MCF 10A (cell line): ENCODE measurements at regions of chr11 and their contacts with region 1.

Region 1: DNA sequence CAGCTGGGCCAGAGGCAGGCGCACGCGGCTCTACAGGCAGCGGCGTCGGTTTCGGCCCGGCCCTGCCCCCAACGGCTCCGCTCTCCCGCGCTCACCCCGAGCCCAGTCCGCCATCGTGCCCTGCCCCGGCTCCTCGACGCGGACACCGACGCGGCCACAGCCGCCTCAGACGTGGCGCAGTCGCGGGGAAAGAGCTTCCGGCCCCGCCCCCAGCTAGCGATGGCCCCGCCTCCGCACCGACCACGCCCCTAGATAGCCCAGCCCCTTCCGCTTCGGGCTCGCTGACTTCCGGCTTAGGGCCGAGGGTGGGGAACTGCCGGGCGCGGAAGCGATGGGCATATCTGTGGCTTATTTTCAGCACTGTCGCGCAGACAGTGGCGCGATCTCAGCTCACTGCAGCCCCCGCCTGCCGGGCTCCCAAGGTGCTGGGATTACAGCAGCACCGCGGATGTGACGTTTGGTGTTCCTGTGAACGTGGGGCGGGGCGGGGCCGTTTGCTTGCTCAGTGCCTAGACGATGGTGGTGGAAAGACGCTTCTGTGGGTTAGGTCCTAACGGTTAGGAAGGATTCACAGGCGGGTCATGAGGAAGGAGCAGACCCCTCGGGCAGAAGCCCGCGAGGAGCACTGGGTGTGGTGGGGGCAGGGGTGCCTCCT is at the starts of genes BET1L and RIC8A:
- DNase-seq: peak; percentile 97
- H3K4me3 Mint-ChIP-seq: peak within 1 kb of the TSS; percentile 99
- H3K27ac Mint-ChIP-seq: peak within 1 kb of the TSS; percentile 99
- H3K4me1 Mint-ChIP-seq: peaks cover 15% of the 10 kb centered on the region
- H3K27me3 Mint-ChIP-seq: no peaks in the 10 kb centered on the region
- CTCF ChIP-seq: no peak
- total RNA-seq, gene BET1L: 65.3 and 66.1 TPM in 2 replicates
- total RNA-seq, gene RIC8A: 93.3 and 109 TPM in 2 replicates

Region 2: DNA sequence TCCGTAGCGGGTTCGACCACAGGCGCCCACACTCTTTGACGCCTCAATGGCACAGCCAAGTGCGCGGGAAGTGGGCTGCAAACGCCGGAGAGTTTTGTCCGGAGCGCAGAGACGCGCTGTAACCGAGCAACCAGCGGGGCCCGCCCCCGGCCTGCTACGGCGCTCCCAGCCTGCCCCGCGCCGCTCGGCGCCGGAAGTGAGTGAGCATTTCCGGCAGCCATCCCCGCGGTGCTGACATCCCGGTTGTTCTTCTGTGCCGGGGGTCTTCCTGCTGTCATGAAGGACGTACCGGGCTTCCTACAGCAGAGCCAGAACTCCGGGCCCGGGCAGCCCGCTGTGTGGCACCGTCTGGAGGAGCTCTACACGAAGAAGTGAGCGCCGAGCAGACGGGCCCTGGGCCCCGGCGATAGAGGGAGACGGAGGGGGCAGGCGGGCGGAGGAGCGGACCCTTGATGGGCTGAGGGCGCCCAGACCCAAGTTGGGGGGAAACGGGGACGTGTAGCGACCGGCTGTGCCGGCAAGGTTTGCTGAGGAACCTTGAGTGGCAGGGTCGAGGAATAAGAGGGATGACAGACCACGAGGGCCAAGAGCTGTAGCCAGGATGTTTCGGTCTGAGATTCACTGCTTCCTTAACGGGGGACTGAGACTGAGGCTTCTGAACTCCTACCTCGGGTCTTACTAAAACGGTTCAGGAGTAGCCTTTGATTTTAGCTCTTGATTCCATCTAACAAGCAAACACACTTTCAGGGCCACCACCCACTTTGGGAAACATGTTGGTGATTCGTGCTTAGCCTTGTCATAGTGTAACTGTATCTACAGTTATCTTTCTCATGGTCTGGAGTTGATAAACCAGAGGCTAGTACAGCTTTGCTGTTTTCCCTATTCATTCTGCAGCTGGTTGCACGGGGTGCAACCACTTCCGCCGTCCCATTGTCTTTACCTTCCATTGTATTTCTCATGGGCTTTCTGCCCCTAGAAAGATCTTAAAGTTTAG is 29.7 kb after region 1 on chr11 and contains the start of gene PSMD13:
- CTCF ChIA-PET with region 1: interaction called, 3 read pairs
- POLR2A ChIA-PET with region 1: interaction called, 136 read pairs
- intact Hi-C with region 1: loop called (anchors 2 kb)
- DNase-seq: peak; percentile 76
- H3K4me3 Mint-ChIP-seq: peak within 1 kb of the TSS; percentile 79
- H3K27ac Mint-ChIP-seq: peak within 1 kb of the TSS; percentile 96
- H3K4me1 Mint-ChIP-seq: peaks cover 24% of the 10 kb centered on the region
- H3K27me3 Mint-ChIP-seq: no peaks in the 10 kb centered on the region
- CTCF ChIP-seq: no peak
- total RNA-seq, gene PSMD13: 86.8 and 103 TPM in 2 replicates

Region 3: DNA sequence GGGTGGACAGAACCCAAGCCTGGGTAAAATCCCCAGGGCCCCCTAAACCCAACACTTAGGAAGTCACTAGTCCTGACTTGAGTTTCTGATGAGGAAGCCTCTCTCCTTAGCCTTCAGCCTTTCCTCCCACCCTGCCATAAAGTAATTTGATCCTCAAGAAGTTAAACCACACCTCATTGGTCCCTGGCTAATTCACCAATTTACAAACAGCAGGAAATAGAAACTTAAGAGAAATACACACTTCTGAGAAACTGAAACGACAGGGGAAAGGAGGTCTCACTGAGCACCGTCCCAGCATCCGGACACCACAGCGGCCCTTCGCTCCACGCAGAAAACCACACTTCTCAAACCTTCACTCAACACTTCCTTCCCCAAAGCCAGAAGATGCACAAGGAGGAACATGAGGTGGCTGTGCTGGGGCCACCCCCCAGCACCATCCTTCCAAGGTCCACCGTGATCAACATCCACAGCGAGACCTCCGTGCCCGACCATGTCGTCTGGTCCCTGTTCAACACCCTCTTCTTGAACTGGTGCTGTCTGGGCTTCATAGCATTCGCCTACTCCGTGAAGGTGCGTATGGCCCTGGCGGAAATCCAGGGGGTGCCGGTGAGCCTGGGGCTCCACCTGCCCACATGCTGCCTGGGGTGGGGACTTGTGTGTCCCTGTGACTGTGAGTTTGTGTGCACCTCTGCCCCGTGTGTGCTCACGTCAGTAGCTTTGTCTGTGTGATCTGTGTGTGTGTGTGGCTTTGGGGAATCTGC is 106.6 kb after region 1 on chr11 and contains the start of gene IFITM1:
- CTCF ChIA-PET with region 1: no interaction called
- POLR2A ChIA-PET with region 1: interaction called, 14 read pairs
- intact Hi-C with region 1: no loop called
- DNase-seq: peak; percentile 74
- H3K4me3 Mint-ChIP-seq: peak within 1 kb of the TSS; percentile 46
- H3K27ac Mint-ChIP-seq: no peak within 1 kb of the TSS
- H3K4me1 Mint-ChIP-seq: peaks cover 19% of the 10 kb centered on the region
- H3K27me3 Mint-ChIP-seq: no peaks in the 10 kb centered on the region
- CTCF ChIP-seq: no peak
- total RNA-seq, gene IFITM1: 1.8 and 4.8 TPM in 2 replicates

Region 4: GRCh38 chr11:363948-364761 is 156.8 kb after region 1 on chr11:
- CTCF ChIA-PET with region 1: interaction called, 8 read pairs
- POLR2A ChIA-PET with region 1: interaction called, 14 read pairs
- intact Hi-C with region 1: no loop called
- DNase-seq: peak; percentile 88
- H3K4me3 Mint-ChIP-seq: peak overlapping the region; percentile 35
- H3K27ac Mint-ChIP-seq: peak overlapping the region; percentile 13
- H3K4me1 Mint-ChIP-seq: peaks cover 17% of the 10 kb centered on the region
- H3K27me3 Mint-ChIP-seq: peaks cover 24% of the 10 kb centered on the region
- CTCF ChIP-seq: peak; percentile 81

Region 5: GRCh38 chr11:506238-506994 is 299.1 kb after region 1 on chr11:
- CTCF ChIA-PET with region 1: interaction called, 3 read pairs
- POLR2A ChIA-PET with region 1: interaction called, 29 read pairs
- intact Hi-C with region 1: no loop called
- DNase-seq: peak; percentile 95
- H3K4me3 Mint-ChIP-seq: peak overlapping the region; percentile 95
- H3K27ac Mint-ChIP-seq: peak overlapping the region; percentile 99
- H3K4me1 Mint-ChIP-seq: peaks cover 6% of the 10 kb centered on the region
- H3K27me3 Mint-ChIP-seq: no peaks in the 10 kb centered on the region
- CTCF ChIP-seq: no peak

Region 6: DNA sequence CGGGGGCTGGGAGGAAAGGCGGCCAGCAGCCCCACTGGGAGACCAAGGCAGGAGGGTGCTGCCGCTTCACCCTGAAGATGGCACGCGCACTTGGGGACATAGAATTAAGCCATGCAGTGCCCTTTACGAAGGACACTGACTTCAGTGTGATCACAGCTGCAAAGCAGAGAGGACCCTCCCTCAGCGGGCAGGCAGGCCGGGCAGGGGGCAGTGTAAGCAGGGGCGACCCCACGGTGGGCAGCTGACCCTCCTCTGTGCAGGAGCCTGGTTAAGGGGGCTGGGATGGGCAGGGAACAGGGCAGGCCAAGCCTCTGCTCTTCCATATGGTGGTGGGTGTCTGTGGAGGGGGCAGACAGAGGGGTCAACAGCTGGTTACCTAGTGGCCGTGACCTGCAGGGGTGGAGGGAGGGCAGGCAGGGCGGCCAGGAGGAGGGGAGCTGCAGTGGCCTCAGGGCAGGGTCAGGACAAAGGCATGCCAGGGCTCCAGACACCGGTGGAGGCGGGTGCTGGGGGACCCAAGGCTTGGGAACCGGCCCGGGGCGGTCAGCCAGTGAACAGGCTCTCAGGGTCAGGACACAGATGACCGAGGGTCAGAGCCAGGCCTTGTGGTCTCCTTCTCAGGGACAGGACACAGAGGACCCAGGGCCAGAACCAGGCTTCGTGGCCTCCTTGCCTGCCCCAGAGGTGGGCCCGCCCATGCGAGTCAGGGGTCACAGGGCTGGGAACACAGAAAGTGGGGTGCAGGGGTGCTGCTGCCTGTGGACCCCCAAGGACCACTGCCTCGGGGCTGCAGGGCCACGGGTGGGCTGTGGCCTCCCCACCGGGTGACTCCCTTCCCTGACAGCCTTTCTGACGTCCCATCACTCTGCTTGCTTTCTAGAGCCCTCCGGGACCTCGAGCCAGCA is 346.0 kb after region 1 on chr11:
- CTCF ChIA-PET with region 1: no interaction called
- POLR2A ChIA-PET with region 1: no interaction called
- intact Hi-C with region 1: no loop called
- DNase-seq: no peak
- H3K4me3 Mint-ChIP-seq: no peak overlapping the region
- H3K27ac Mint-ChIP-seq: no peak overlapping the region
- H3K4me1 Mint-ChIP-seq: no peaks in the 10 kb centered on the region
- H3K27me3 Mint-ChIP-seq: no peaks in the 10 kb centered on the region
- CTCF ChIP-seq: no peak